ENCODE measurements at regions of chr1 and their contacts with region 1.

Region 1: DNA sequence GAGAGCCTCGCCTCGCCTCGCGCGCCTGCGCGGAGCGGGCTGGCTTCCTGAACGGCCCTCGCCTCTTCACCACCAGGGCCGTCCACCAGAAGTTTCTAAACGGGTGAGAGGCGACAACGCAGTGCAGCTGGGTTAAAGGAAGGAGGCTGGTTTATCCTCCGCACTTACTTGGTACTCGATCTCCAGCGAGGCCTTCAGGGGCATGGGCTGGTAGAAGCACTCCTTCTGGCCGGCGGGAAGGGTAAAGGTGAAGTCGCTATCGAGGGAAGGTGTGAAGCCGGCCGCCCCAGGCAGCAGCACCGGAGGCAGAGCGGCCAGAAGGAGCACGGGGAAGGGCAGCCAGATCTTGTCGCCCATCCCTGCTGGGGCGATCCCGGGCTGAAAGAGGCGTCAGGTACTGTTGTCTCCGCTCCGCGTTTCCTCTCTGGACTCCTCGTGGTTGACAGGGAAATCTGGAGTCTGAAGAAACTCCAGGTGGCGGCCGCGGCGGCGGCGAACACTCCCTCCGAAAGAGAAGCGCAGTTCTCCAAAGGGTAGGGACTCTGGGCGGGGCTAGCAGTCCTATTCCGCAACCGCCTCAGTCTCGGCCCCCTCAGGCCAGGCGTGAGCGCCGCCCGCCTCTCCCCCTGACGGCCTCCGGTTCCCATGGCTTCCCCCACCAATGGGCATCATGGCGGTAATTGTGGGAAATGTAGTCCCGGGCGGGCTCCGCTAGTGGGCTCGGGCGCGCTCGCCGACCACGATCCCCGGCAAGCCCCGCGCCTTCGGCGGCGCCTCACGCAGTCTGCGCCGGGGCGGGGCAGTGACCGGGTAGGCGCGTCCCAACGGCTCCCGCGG is at the start of gene TMED5:
- DNase-seq: peak; percentile 98
- ATAC-seq: peak; percentile 90 to 95
- H3K4me3 ChIP-seq: peak within 1 kb of the TSS; percentile 92 to 99 (median 94)
- H3K27ac ChIP-seq: peak within 1 kb of the TSS; percentile 93 to 100 (median 100)
- H3K4me1 ChIP-seq: peaks cover 24 to 28% of the 10 kb centered on the region in 2 donors
- H3K27me3 ChIP-seq: no peaks in the 10 kb centered on the region
- CTCF ChIP-seq: peak in 4 of 5 experiments; percentile 10 to 31 (median 26)
- POLR2A ChIP-seq: peak; percentile 96
- total RNA-seq, gene TMED5: 99.5 to 150 (median 127) TPM

Region 2: DNA sequence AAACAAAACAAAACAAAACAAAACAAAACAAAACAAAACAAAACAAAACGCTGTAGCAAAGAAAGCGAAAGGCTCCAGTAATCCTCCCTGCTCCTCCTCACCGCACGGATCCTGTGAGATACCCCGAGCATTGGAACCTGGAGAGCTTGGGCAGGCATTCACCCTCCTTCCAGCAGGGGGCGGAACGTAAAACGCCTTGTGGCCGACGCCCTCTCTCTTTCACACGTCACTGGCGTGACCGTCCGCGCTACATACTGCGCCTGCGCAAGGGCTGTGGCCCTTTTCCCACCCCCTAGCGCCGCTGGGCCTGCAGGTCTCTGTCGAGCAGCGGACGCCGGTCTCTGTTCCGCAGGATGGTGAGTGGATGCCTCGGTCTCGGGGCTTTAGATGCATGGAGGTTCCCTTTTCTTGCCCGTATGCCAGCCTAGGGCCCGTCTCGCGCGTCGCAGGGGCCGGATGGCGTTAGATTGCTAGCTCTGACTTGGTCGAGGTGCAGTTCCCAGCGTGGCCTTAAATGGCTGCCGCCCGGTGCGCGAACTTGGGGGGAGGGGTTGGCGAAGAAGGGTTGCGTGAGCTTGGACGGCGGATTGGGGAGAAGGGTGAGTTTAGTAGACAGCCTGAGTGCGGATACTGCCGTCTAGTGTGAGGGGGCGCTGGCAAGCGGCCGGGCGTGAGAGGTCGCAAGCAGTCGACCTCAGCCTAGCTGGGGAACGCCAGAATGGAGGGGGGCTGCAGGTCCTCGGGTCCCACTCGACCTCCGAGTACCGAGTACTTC is 348.2 kb before region 1 on chr1 and contains the start of gene RPL5:
- in situ Hi-C with region 1: loop called in 1 of 4 experiments (anchors 25 kb)
- intact Hi-C with region 1: loop called (anchors 1 kb)
- DNase-seq: peak; percentile 89 to 96
- ATAC-seq: peak; percentile 97 to 98
- H3K4me3 ChIP-seq: peak within 1 kb of the TSS; percentile 90 to 95 (median 92)
- H3K27ac ChIP-seq: peak within 1 kb of the TSS; percentile 93 to 97 (median 95)
- H3K4me1 ChIP-seq: peaks cover 21% of the 10 kb centered on the region in 2 donors
- H3K27me3 ChIP-seq: no peaks in the 10 kb centered on the region
- CTCF ChIP-seq: peak; percentile 82 to 97 (median 93)
- POLR2A ChIP-seq: peak; percentile 92
- total RNA-seq, gene RPL5: 851 to 985 (median 913) TPM

Region 3: DNA sequence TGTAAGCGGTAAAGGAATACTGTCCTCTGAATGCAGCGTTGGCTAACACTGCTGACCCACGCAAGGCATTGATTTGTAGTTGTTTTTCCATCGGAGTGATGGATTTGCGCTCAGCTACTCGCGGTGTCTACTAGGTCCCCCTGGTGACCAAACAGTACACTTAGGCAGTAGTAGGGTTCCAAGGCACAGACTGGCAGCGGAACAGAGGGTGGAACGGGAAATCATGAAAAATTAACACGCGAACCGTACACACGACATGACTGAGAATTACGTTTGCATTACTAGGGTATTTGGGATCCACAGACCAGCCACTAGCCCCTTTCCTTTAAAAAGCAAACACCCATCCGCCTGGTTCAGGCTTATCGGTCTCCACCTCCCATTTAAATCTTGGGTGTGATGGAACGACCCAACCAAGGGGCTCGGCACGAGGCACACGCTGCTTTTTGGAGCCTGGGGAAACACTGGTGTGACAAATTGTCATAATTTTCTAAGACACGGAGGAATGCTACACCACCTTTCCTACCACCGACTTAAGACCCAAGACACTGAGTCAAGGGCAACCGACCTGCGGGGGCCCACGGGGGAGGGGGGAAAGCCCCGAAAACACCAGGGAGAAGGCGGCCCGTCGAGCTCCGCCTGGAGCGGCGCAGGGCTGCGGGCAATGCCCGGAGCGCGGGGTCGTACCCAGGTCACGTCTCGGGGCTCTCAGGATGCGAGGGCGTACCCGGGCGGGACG is 219.5 kb before region 1 on chr1:
- in situ Hi-C with region 1: no loop called
- intact Hi-C with region 1: loop called (anchors 2 kb)
- DNase-seq: peak; percentile 53 to 66
- ATAC-seq: peak; percentile 71 to 73
- H3K4me3 ChIP-seq: peak overlapping the region; percentile 77 to 94 (median 84)
- H3K27ac ChIP-seq: peak overlapping the region; percentile 84 to 92 (median 90)
- H3K4me1 ChIP-seq: peaks cover 19 to 23% of the 10 kb centered on the region in 2 donors
- H3K27me3 ChIP-seq: no peaks in the 10 kb centered on the region
- CTCF ChIP-seq: peak; percentile 47 to 71 (median 58)
- POLR2A ChIP-seq: peak in 1 of 2 donors; percentile 21

Region 4: DNA sequence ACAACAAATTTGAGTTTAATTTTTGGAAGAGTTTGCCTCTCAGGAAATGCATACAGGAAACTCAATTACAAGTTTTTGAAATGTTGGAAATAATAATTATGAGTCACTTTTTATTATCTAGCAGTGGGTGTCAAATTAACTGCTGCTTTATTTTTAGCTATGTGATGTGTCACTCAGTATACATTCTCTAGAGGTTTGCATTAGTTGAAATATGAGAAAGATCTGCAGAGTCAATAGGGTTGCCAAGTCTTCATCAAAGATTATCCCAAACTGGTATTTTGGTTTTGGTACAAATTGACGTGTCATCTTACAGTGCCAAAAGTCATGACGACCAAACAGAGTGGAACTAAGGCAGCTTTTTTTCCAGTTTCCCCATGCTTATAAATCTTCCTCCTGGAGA is 164.5 kb before region 1 on chr1:
- in situ Hi-C with region 1: no loop called
- intact Hi-C with region 1: loop called (anchors 5 kb)
- DNase-seq: no peak
- ATAC-seq: peak; percentile 69 to 74
- H3K4me3 ChIP-seq: peak overlapping the region in 2 of 4 donors; percentile 1 to 6
- H3K27ac ChIP-seq: peak overlapping the region; percentile 55 to 69 (median 62)
- H3K4me1 ChIP-seq: peaks cover 37 to 41% of the 10 kb centered on the region in 2 donors
- H3K27me3 ChIP-seq: no peaks in the 10 kb centered on the region
- CTCF ChIP-seq: no peak
- POLR2A ChIP-seq: no peak

Region 5: GRCh38 chr1:93078986-93079654 is 101.0 kb before region 1 on chr1 and contains the start of gene MTF2:
- in situ Hi-C with region 1: loop called in 3 of 4 experiments (anchors 5 to 10 kb)
- intact Hi-C with region 1: loop called (anchors 1 kb)
- DNase-seq: peak; percentile 86 to 91
- ATAC-seq: peak; percentile 92 to 94
- H3K4me3 ChIP-seq: peak within 1 kb of the TSS; percentile 74 to 96 (median 96)
- H3K27ac ChIP-seq: peak within 1 kb of the TSS; percentile 83 to 90 (median 89)
- H3K4me1 ChIP-seq: peaks cover 23 to 26% of the 10 kb centered on the region in 2 donors
- H3K27me3 ChIP-seq: no peaks in the 10 kb centered on the region
- CTCF ChIP-seq: no peak
- POLR2A ChIP-seq: peak; percentile 57 to 67
- total RNA-seq, gene MTF2: 5.9 to 11.7 (median 9.5) TPM

Region 6: DNA sequence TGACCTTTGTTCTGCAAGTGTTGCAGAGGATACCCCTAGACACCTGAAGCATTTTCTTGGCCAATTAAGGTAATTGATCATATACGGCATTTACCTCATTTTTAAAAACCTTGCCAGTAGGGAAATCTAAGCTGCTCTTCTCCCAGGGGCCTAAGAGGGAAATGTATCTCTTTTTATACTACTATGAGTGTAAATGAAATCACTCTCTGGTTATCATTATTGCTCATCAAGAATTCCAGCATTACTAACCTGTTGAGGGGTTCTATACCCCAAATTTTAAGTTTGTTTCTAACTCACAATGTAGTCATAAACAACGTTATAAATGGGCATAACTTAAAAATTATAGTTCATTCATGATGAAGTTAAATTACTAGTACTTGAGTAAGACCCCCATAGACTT is 27.3 kb before region 1 on chr1:
- in situ Hi-C with region 1: no loop called
- intact Hi-C with region 1: no loop called
- DNase-seq: no peak
- ATAC-seq: no peak
- H3K4me3 ChIP-seq: no peak overlapping the region
- H3K27ac ChIP-seq: no peak overlapping the region
- H3K4me1 ChIP-seq: peaks cover 5 to 14% of the 10 kb centered on the region in 2 donors
- H3K27me3 ChIP-seq: no peaks in the 10 kb centered on the region
- CTCF ChIP-seq: no peak
- POLR2A ChIP-seq: no peak

Region 7: GRCh38 chr1:93164816-93165215 is 15.3 kb before region 1 on chr1:
- in situ Hi-C with region 1: no loop called
- intact Hi-C with region 1: loop called (anchors 1 kb)
- DNase-seq: peak in 1 of 2 donors; percentile 28
- ATAC-seq: peak; percentile 60 to 76
- H3K4me3 ChIP-seq: no peak overlapping the region
- H3K27ac ChIP-seq: peak overlapping the region; percentile 65 to 82 (median 75)
- H3K4me1 ChIP-seq: peaks cover 29 to 41% of the 10 kb centered on the region in 2 donors
- H3K27me3 ChIP-seq: no peaks in the 10 kb centered on the region
- CTCF ChIP-seq: no peak
- POLR2A ChIP-seq: no peak

Region 8: GRCh38 chr1:93345633-93346420 is 165.7 kb after region 1 on chr1 and contains the start of gene DR1:
- in situ Hi-C with region 1: no loop called
- intact Hi-C with region 1: loop called (anchors 2 kb)
- DNase-seq: peak; percentile 93 to 97
- ATAC-seq: peak; percentile 88 to 94
- H3K4me3 ChIP-seq: peak within 1 kb of the TSS; percentile 82 to 97 (median 94)
- H3K27ac ChIP-seq: peak within 1 kb of the TSS; percentile 95 to 98 (median 96)
- H3K4me1 ChIP-seq: peaks cover 24 to 39% of the 10 kb centered on the region in 2 donors
- H3K27me3 ChIP-seq: no peaks in the 10 kb centered on the region
- CTCF ChIP-seq: no peak
- POLR2A ChIP-seq: peak; percentile 80 to 83
- total RNA-seq, gene DR1: 26.8 to 59.1 (median 37.9) TPM

Measured in gastrocnemius medialis (tissue), 4 donors.